B cell (primary cell): ENCODE measurements at regions of chrX and their contacts with region 1.

Region 1: GRCh38 chrX:12701628-12702027 is 89.6 kb upstream of the PRPS2 start:
- DNase-seq: peak; percentile 65
- ATAC-seq: peak; percentile 60
- H3K4me3 ChIP-seq: no peak overlapping the region
- H3K4me3 Mint-ChIP-seq: no peak overlapping the region
- H3K27ac ChIP-seq: no peak overlapping the region
- H3K27ac Mint-ChIP-seq: no peak overlapping the region
- H3K4me1 ChIP-seq: peaks cover 0 to 15% of the 10 kb centered on the region in 2 donors
- H3K4me1 Mint-ChIP-seq: peaks cover 28% of the 10 kb centered on the region
- H3K27me3 ChIP-seq: no peaks in the 10 kb centered on the region
- H3K27me3 Mint-ChIP-seq: peaks cover 2% of the 10 kb centered on the region
- CTCF ChIP-seq: peak; percentile 58

Region 2: DNA sequence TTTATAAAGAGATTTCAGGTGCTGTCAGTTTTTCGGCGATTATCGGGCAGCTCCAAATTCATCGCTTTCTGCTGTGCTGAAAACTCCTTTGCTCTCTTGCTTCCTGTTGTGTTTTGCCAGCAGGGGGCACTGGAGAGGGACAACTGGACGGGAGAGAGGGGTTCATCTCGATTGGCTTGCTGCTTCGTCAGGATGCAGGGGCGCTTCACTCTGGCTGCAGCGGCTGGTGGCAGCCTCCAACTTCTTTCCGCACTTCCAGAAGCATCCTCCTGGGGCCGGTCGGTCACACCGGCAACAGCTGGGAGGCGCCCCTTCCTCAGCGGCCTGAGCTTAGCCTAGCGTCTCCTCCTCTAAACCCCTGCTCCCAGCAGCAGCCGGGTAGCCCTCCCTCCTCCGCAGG is 914.1 kb before region 1 on chrX:
- CTCF ChIA-PET with region 1: interaction called, 4 read pairs
- POLR2A ChIA-PET with region 1: no interaction called
- intact Hi-C with region 1: loop called (anchors 2 kb)
- DNase-seq: peak; percentile 68
- ATAC-seq: peak; percentile 58
- H3K4me3 ChIP-seq: peak overlapping the region in 3 of 5 experiments; percentile 14 to 24 (median 22)
- H3K4me3 Mint-ChIP-seq: peak overlapping the region; percentile 66
- H3K27ac ChIP-seq: no peak overlapping the region
- H3K27ac Mint-ChIP-seq: no peak overlapping the region
- H3K4me1 ChIP-seq: peaks cover 8 to 9% of the 10 kb centered on the region in 2 donors
- H3K4me1 Mint-ChIP-seq: peaks cover 19% of the 10 kb centered on the region
- H3K27me3 ChIP-seq: no peaks in the 10 kb centered on the region
- H3K27me3 Mint-ChIP-seq: no peaks in the 10 kb centered on the region
- CTCF ChIP-seq: peak; percentile 46

Region 3: DNA sequence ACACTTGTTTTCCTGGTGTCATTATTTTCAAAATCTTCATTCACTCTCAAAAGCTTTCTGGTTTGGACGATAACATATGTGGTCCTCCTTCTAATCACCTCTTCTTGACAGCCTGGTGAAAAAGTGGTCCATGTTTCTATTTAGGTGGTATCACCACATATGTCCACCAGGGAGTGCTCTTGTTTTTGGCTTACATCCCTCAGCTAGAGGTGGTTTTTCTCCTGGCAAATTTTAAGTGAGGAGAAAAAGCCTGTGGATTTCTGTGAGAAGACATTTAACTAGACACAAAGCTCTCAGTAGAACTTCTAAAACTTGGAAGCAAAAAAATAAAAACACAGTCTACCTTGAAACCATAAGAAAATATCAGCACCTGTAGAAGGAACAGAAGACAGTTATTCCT is 621.4 kb before region 1 on chrX:
- CTCF ChIA-PET with region 1: interaction called, 19 read pairs
- POLR2A ChIA-PET with region 1: no interaction called
- intact Hi-C with region 1: no loop called
- DNase-seq: peak; percentile 40
- ATAC-seq: no peak
- H3K4me3 ChIP-seq: no peak overlapping the region
- H3K4me3 Mint-ChIP-seq: no peak overlapping the region
- H3K27ac ChIP-seq: no peak overlapping the region
- H3K27ac Mint-ChIP-seq: no peak overlapping the region
- H3K4me1 ChIP-seq: no peaks in the 10 kb centered on the region
- H3K4me1 Mint-ChIP-seq: no peaks in the 10 kb centered on the region
- H3K27me3 ChIP-seq: no peaks in the 10 kb centered on the region
- H3K27me3 Mint-ChIP-seq: peaks cover 9% of the 10 kb centered on the region
- CTCF ChIP-seq: peak; percentile 42

Region 4: DNA sequence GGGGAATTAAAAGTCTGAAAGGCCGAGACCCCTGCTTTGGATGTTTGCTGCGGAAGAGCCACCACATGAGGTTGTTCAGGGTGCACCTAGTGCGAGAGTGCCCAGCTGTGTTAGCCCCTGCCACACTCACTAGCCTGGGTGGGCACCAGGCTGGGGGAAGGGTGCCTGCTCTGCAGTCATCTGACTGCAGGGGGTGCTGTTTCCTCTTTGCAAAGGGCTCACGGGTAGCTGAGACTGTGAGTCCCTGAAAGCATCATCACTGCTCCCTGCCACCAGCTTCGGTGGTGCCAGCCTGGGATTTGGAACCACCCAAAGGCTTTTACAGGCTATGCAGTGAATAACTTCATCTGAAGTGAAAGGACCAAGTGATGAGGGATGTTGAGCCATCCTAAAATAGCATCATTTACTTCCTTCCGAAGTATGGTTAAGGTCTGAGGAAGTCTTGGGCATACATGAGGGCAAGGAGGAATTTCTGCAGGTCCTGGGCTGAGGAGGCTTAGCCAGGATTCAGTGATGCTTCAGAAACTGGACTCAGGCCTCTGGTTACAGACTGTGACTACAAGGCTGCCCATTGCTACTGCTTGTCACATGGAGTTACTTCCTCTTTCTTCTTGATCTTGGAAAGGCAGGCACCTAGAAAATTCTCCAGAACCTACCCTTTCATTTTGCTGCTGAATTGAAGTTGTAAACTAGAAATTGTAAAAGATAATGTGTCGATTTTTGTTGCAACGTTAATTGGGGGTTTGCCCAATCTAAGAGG is 203.6 kb before region 1 on chrX:
- CTCF ChIA-PET with region 1: interaction called, 3 read pairs
- POLR2A ChIA-PET with region 1: no interaction called
- intact Hi-C with region 1: loop called (anchors 5 kb)
- DNase-seq: peak; percentile 17
- ATAC-seq: peak; percentile 24
- H3K4me3 ChIP-seq: no peak overlapping the region
- H3K4me3 Mint-ChIP-seq: no peak overlapping the region
- H3K27ac ChIP-seq: no peak overlapping the region
- H3K27ac Mint-ChIP-seq: no peak overlapping the region
- H3K4me1 ChIP-seq: peaks cover 15 to 16% of the 10 kb centered on the region in 2 donors
- H3K4me1 Mint-ChIP-seq: peaks cover 15% of the 10 kb centered on the region
- H3K27me3 ChIP-seq: no peaks in the 10 kb centered on the region
- H3K27me3 Mint-ChIP-seq: no peaks in the 10 kb centered on the region
- CTCF ChIP-seq: no peak

Region 5: DNA sequence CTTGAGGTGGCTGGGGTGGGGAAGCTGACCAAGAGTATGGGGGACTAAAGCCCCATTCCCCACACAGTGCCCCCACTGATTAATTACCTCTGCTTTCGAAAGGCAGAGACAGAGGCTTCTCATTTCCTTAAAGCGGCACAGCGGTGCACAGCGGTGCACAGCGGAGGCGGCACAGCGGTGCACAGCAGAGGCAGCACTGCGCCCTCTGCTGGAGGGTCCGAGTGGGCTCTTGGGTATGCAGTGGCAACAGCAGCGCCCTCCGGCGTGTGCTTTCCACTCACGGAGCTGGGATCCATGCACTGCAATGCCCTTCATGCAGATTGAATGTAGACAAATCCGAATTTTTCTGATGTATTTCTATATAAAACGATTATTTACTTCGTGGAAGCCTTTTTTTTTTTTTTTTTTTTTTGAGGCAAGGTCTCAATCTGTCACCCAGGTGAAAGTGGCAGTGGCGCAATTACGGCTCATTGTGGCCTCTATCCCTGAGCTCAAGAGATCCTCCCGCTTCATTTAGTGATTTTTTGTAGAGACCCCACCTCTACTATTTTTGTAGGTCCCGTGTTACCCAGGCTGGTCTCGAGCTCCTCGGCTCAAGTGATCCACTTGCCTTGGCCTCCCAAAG is 69.9 kb after region 1 on chrX:
- CTCF ChIA-PET with region 1: interaction called, 31 read pairs
- POLR2A ChIA-PET with region 1: no interaction called
- intact Hi-C with region 1: loop called (anchors 1 kb)
- DNase-seq: peak; percentile 87
- ATAC-seq: peak; percentile 100
- H3K4me3 ChIP-seq: no peak overlapping the region
- H3K4me3 Mint-ChIP-seq: peak overlapping the region; percentile 37
- H3K27ac ChIP-seq: no peak overlapping the region
- H3K27ac Mint-ChIP-seq: no peak overlapping the region
- H3K4me1 ChIP-seq: peaks cover 8 to 12% of the 10 kb centered on the region in 2 donors
- H3K4me1 Mint-ChIP-seq: peaks cover 10% of the 10 kb centered on the region
- H3K27me3 ChIP-seq: peaks cover 0 to 2% (median 0%) of the 10 kb centered on the region in 4 experiments
- H3K27me3 Mint-ChIP-seq: peaks cover 4% of the 10 kb centered on the region
- CTCF ChIP-seq: peak; percentile 76

Region 6: GRCh38 chrX:12901486-12901885 is 199.9 kb after region 1 on chrX:
- CTCF ChIA-PET with region 1: interaction called, 5 read pairs
- POLR2A ChIA-PET with region 1: no interaction called
- intact Hi-C with region 1: loop called (anchors 5 kb)
- DNase-seq: peak; percentile 70
- ATAC-seq: peak; percentile 65
- H3K4me3 ChIP-seq: no peak overlapping the region
- H3K4me3 Mint-ChIP-seq: no peak overlapping the region
- H3K27ac ChIP-seq: no peak overlapping the region
- H3K27ac Mint-ChIP-seq: no peak overlapping the region
- H3K4me1 ChIP-seq: peaks cover 0 to 7% of the 10 kb centered on the region in 2 donors
- H3K4me1 Mint-ChIP-seq: peaks cover 5% of the 10 kb centered on the region
- H3K27me3 ChIP-seq: no peaks in the 10 kb centered on the region
- H3K27me3 Mint-ChIP-seq: no peaks in the 10 kb centered on the region
- CTCF ChIP-seq: peak; percentile 67

Region 7: DNA sequence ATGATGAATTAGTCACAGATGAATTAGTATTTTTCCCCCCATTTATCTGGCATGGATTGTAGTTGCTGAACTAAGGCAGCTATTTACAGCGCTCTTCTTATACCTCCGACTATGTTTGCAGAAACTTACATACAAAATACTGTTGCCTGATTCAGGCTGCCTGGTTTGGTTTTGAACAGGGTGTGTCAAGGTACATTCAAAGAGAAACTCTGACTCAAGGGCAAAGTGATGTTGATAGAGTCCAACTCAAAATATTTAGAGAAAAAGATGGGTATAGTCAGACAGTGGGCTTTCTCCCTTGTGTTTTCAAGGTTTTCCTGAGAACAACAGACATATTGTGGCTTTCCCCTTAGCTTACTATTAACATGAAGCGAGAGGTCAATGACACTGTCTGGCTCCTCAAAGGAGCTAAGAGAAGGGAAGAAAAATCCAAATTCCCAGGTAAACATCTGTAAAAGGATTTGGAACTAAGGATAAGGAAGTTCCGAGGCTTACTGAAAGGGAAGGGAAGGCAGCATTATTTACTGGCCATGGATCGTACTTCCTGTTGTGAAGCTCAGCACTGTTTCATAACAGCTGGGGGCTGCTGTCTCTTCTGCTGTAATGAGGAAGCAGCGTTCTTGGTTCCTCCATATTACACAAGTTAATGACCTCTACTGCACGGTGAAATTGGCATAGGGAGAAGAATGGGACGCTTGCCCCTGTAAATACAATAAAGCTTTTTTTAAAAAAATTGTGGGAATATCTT is 311.9 kb after region 1 on chrX:
- CTCF ChIA-PET with region 1: no interaction called
- POLR2A ChIA-PET with region 1: no interaction called
- intact Hi-C with region 1: no loop called
- DNase-seq: peak; percentile 72
- ATAC-seq: peak; percentile 94
- H3K4me3 ChIP-seq: peak overlapping the region in 2 of 5 experiments; percentile 16 to 42
- H3K4me3 Mint-ChIP-seq: peak overlapping the region; percentile 42
- H3K27ac ChIP-seq: peak overlapping the region; percentile 61 to 68
- H3K27ac Mint-ChIP-seq: peak overlapping the region; percentile 82
- H3K4me1 ChIP-seq: peaks cover 55 to 64% of the 10 kb centered on the region in 2 donors
- H3K4me1 Mint-ChIP-seq: peaks cover 63% of the 10 kb centered on the region
- H3K27me3 ChIP-seq: peaks cover 0 to 5% (median 0%) of the 10 kb centered on the region in 4 experiments
- H3K27me3 Mint-ChIP-seq: no peaks in the 10 kb centered on the region
- CTCF ChIP-seq: no peak

Region 8: GRCh38 chrX:13440176-13440575 is 738.5 kb after region 1 on chrX:
- CTCF ChIA-PET with region 1: no interaction called
- POLR2A ChIA-PET with region 1: no interaction called
- intact Hi-C with region 1: no loop called
- DNase-seq: no peak
- ATAC-seq: no peak
- H3K4me3 ChIP-seq: no peak overlapping the region
- H3K4me3 Mint-ChIP-seq: no peak overlapping the region
- H3K27ac ChIP-seq: no peak overlapping the region
- H3K27ac Mint-ChIP-seq: no peak overlapping the region
- H3K4me1 ChIP-seq: peaks cover 22 to 23% of the 10 kb centered on the region in 2 donors
- H3K4me1 Mint-ChIP-seq: peaks cover 39% of the 10 kb centered on the region
- H3K27me3 ChIP-seq: no peaks in the 10 kb centered on the region
- H3K27me3 Mint-ChIP-seq: no peaks in the 10 kb centered on the region
- CTCF ChIP-seq: no peak